Astrocyte of the cerebellum (primary cell): ENCODE measurements at regions of chr6 and their contacts with region 1.

Region 1: DNA sequence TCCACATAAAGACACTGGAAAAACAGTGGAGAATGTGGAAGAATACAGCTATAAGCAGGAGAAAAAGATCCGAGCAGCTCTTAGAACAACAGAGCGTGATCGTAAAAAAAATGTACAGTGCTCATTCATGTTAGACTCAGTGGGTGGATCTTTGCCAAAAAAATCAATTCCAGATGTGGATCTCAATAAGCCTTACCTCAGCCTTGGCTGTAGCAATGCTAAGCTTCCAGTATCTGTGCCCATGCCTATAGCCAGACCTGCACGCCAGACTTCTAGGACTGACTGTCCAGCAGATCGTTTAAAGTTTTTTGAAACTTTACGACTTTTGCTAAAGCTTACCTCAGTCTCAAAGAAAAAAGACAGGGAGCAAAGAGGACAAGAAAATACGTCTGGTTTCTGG is 57.1 kb downstream of the MAP3K4 start:
- DNase-seq: peak; percentile 76
- H3K4me3 ChIP-seq: no peak overlapping the region
- CTCF ChIP-seq: no peak

Region 2: DNA sequence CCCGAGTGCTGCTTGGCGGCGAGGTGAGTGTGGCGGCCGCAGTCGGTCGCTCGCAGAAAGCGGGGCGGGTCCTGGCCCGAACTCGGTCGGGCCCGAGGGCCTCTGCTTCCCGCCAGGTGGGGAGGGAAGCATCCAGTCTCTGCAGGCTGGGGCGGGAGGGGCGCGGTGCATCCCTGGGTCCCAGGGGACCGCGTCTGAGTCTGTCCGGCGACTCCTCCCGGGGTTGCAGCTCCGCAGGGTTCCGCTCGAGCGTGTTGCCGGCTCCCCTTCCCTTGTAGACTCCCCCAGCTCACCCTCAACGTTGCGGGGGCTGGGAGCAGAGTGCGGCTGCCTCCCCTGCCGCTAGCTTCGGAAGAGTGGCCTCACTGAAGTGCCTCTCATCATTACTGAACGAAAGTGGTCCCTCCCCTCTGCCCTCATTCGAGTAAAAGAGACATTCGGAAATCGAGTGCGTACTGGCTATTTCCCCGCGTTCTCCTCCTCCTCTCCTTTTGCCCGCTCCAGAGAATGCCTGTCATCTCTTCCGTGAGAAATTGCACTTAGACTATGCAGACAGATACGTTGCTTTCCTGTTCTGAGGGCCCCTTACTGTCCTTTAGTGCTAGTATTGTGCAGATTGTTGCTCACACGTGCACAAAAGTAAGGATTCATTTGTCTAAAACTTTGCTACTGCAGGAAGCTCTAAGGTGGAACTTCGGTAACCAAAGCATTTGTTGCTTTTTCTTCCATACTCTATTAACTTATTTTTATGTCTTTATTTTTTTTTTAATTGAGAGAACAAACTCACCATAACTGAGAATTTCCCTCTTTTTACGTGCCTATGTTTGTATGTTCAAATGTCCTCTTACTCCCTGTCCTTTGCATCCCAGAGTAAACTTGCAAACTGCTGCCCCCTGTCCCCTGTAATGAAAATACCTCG is 56.3 kb before region 1 on chr6:
- in situ Hi-C with region 1: loop called (anchors 10 kb)
- DNase-seq: no peak
- H3K4me3 ChIP-seq: peak overlapping the region; percentile 76
- CTCF ChIP-seq: peak; percentile 84

Region 3: GRCh38 chr6:161139766-161140553 is 91.3 kb after region 1 on chr6:
- in situ Hi-C with region 1: loop called (anchors 10 kb)
- DNase-seq: no peak
- H3K4me3 ChIP-seq: no peak overlapping the region
- CTCF ChIP-seq: no peak

Region 4: GRCh38 chr6:161273752-161274487 is 225.3 kb after region 1 on chr6 and contains the start of gene AGPAT4:
- in situ Hi-C with region 1: loop called (anchors 5 kb)
- DNase-seq: peak; percentile 97
- H3K4me3 ChIP-seq: peak within 1 kb of the TSS; percentile 72
- CTCF ChIP-seq: no peak